Activated naive CD8-positive, alpha-beta T cell treated with anti-CD3 and anti-CD28 coated beads, Interleukin-2, amount 10 ng/mL, durations not matched to agents 7 days and 5 days (primary cell): ENCODE measurements at regions of chr18 and their contacts with region 1.

Region 1: GRCh38 chr18:9136315-9137155 is at the start of gene ANKRD12:
- DNase-seq: peak; percentile 99
- ATAC-seq: peak; percentile 78
- H3K4me3 Mint-ChIP-seq: peak within 1 kb of the TSS; percentile 97
- H3K27ac Mint-ChIP-seq: peak within 1 kb of the TSS; percentile 99
- H3K4me1 Mint-ChIP-seq: peaks cover 45% of the 10 kb centered on the region
- H3K27me3 Mint-ChIP-seq: no peaks in the 10 kb centered on the region
- total RNA-seq, gene ANKRD12: 107 to 117 TPM

Region 2: GRCh38 chr18:9082711-9083510 is 53.6 kb before region 1 on chr18:
- POLR2A ChIA-PET with region 1: interaction called, 33 read pairs
- DNase-seq: no peak
- ATAC-seq: peak; percentile 84
- H3K4me3 Mint-ChIP-seq: peak overlapping the region; percentile 76
- H3K27ac Mint-ChIP-seq: peak overlapping the region; percentile 93
- H3K4me1 Mint-ChIP-seq: peaks cover 30% of the 10 kb centered on the region
- H3K27me3 Mint-ChIP-seq: no peaks in the 10 kb centered on the region

Region 3: DNA sequence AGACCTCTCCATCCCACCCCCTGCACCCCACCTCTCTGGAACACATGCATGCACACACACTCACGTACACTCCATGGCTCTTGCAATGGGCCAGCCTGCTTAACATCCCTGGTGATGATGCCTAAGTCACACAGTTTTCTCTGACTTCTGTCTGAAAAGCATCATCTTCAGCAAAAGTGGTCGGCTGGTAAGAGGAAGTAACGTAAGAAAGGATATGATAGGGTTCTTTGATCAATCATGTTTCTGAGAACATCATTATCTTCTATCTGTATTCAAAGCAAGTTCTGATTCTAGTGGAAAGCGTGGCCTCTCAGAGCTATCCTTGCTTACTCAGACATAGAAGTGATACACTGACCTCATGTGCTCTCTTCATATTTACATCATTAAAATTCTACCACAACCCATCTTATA is 45.5 kb before region 1 on chr18:
- POLR2A ChIA-PET with region 1: interaction called, 22 read pairs
- DNase-seq: no peak
- ATAC-seq: peak; percentile 84
- H3K4me3 Mint-ChIP-seq: peak overlapping the region; percentile 91
- H3K27ac Mint-ChIP-seq: peak overlapping the region; percentile 97
- H3K4me1 Mint-ChIP-seq: peaks cover 66% of the 10 kb centered on the region
- H3K27me3 Mint-ChIP-seq: no peaks in the 10 kb centered on the region

Region 4: DNA sequence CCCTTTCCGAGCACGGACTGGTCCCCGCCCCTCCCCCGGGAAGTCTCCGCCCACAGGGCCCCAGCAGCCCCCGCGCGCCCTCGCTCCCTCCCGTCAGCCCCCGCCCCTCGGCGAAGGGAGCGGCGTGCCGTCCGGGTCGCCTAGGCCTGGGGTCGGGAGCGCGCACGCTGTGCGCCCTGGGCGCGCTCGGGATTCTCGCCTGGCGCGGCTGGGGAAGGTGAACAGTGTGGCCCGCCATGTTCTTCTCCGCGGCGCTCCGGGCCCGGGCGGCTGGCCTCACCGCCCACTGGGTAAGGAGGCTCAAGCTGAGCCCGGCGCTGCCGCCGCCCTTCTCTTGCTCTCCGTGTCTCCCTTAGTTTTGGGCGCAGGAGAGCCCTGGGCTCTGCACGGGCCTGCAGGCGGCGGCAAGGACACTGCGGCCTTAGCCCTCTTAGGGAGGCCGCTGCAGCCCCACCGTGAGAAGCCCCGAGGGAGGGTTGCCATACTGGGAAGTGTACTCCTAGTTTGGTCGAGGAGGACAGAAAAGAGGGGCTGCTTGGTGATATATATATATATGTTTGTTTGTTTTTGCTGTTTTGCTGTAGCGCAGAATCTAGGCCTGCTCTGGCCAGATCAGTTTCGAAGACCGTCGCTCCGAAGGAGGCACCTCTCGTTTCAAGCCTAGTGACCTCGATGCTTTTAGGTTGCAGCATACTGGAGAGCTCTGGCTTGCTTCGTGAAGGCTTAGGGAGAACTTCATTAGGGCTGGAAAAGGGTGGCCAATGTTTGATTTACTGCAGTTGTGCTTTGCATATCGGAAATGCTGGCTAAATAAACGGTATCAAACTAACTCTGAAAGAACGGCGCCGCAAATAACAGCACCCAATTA is 33.8 kb before region 1 on chr18 and contains the start of gene NDUFV2:
- POLR2A ChIA-PET with region 1: interaction called, 99 read pairs
- DNase-seq: peak; percentile 99
- ATAC-seq: peak; percentile 91
- H3K4me3 Mint-ChIP-seq: peak within 1 kb of the TSS; percentile 99
- H3K27ac Mint-ChIP-seq: peak within 1 kb of the TSS; percentile 98
- H3K4me1 Mint-ChIP-seq: peaks cover 48% of the 10 kb centered on the region
- H3K27me3 Mint-ChIP-seq: no peaks in the 10 kb centered on the region
- total RNA-seq, gene NDUFV2: 166 to 168 TPM

Region 5: GRCh38 chr18:9117980-9118841 is 18.3 kb before region 1 on chr18:
- POLR2A ChIA-PET with region 1: interaction called, 32 read pairs
- DNase-seq: no peak
- ATAC-seq: peak; percentile 46
- H3K4me3 Mint-ChIP-seq: peak overlapping the region; percentile 71
- H3K27ac Mint-ChIP-seq: peak overlapping the region; percentile 91
- H3K4me1 Mint-ChIP-seq: peaks cover 50% of the 10 kb centered on the region
- H3K27me3 Mint-ChIP-seq: no peaks in the 10 kb centered on the region

Region 6: DNA sequence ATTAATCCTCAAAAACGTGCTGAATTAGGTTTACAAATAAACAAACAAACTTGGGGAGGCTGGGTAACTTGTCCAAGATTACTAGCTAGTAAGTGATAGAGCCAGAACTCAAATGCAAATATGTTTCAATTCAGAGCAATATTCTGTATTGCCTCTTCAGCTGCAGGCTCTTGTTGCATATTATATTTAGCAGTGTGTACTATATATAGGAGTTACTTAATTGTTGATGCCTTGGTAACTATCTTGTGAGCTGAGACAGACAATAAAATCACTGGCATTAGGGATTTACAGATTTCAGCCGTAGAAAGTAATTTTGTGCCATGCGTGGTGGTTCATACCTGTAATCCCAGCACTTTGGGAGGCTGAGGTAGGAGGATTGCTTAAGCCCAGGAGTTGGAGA is 10.2 kb before region 1 on chr18:
- POLR2A ChIA-PET with region 1: interaction called, 24 read pairs
- DNase-seq: no peak
- ATAC-seq: no peak
- H3K4me3 Mint-ChIP-seq: no peak overlapping the region
- H3K27ac Mint-ChIP-seq: no peak overlapping the region
- H3K4me1 Mint-ChIP-seq: peaks cover 20% of the 10 kb centered on the region
- H3K27me3 Mint-ChIP-seq: no peaks in the 10 kb centered on the region

Region 7: DNA sequence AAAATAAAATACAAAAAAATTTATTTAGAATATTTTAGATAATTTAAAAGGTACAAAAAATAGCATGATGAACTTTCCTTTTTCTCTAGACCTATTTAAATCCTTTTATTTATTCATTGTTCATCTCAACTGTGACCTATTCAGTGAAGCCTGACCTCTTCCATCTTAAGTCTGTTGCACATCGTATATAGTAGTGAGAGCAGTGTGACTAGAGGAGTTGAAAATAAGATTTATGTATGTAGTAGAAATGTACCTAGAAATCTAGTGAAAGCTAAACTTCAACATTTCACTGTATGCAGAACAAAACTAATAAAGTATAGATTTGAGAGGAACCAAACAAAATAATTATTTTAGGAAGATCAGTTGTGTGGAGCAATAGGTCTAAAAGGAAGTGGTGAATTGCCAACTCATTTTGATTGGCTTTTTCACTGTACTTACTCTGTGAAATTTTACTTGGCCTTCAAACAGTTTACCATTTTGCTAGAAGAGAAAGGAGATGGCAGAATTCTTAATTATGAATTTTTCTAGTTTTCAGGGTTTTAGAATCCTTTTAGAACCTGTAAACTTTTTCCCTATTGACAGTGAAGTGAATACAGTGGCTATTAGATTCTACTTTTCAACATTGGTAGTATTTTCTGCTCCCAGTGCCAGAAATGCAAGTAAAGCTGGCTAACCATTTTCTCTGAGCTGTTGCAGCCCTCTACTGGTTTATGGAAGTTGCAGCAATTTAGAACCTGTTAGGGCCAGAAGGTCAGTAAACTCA is 11.1 kb after region 1 on chr18:
- POLR2A ChIA-PET with region 1: interaction called, 17 read pairs
- DNase-seq: no peak
- ATAC-seq: peak; percentile 73
- H3K4me3 Mint-ChIP-seq: peak overlapping the region; percentile 72
- H3K27ac Mint-ChIP-seq: peak overlapping the region; percentile 91
- H3K4me1 Mint-ChIP-seq: peaks cover 54% of the 10 kb centered on the region
- H3K27me3 Mint-ChIP-seq: no peaks in the 10 kb centered on the region

Region 8: GRCh38 chr18:9173770-9174233 is 37.3 kb after region 1 on chr18:
- POLR2A ChIA-PET with region 1: no interaction called
- DNase-seq: no peak
- ATAC-seq: no peak
- H3K4me3 Mint-ChIP-seq: no peak overlapping the region
- H3K27ac Mint-ChIP-seq: no peak overlapping the region
- H3K4me1 Mint-ChIP-seq: peaks cover 10% of the 10 kb centered on the region
- H3K27me3 Mint-ChIP-seq: no peaks in the 10 kb centered on the region